ENCODE measurements at regions of chr1 and their contacts with region 1.

Region 1: DNA sequence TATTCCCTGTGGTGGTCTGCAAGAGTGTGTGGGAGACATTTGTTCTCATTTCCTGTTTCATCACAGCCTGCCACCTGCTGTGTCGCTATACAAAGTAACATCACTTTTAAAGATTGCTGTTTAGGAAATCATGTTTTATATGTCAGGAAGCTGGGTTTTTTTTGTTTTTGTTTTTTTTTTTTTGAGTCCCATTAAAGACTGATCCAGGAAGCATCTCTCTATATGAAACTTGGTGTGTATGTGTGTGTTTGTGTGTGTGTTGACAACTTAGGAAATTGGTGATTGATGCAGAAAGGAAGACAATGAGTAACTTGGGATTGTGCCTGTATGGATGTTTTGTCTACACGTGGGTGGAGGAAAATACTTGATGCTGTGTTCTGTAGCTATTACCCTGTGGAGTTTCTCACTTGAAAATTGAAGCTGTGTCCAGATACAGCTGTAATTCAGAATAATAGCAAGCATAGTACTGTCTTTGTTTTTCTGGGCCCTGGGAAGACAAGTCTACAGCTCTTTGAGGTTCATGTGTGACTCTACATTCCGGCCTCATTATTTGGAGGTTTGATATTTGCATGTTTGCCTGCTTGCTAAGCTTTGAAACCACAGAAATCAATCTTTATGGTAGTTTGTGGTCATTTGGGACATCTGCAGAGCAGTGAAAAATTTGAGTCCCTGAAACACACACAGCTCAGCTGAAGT is 47.9 kb downstream of the LAMC1 start:
- DNase-seq: no peak
- ATAC-seq: peak; percentile 67
- H3K4me3 Mint-ChIP-seq: peak overlapping the region; percentile 50
- H3K27ac Mint-ChIP-seq: no peak overlapping the region
- H3K4me1 Mint-ChIP-seq: peaks cover 33% of the 10 kb centered on the region
- H3K27me3 Mint-ChIP-seq: peaks cover 6% of the 10 kb centered on the region
- CTCF ChIP-seq: no peak

Region 2: GRCh38 chr1:182829285-182829932 is 241.7 kb before region 1 on chr1:
- CTCF ChIA-PET with region 1: no interaction called
- POLR2A ChIA-PET with region 1: no interaction called
- intact Hi-C with region 1: no loop called
- DNase-seq: no peak
- ATAC-seq: peak; percentile 64
- H3K4me3 Mint-ChIP-seq: peak overlapping the region; percentile 58
- H3K27ac Mint-ChIP-seq: peak overlapping the region; percentile 84
- H3K4me1 Mint-ChIP-seq: peaks cover 9% of the 10 kb centered on the region
- H3K27me3 Mint-ChIP-seq: no peaks in the 10 kb centered on the region
- CTCF ChIP-seq: no peak

Region 3: GRCh38 chr1:183048087-183049085 is 22.7 kb before region 1 on chr1:
- CTCF ChIA-PET with region 1: interaction called, 7 read pairs
- POLR2A ChIA-PET with region 1: interaction called, 9 read pairs
- intact Hi-C with region 1: loop called (anchors 2 kb)
- DNase-seq: no peak
- ATAC-seq: peak; percentile 98
- H3K4me3 Mint-ChIP-seq: peak overlapping the region; percentile 8
- H3K27ac Mint-ChIP-seq: peak overlapping the region; percentile 88
- H3K4me1 Mint-ChIP-seq: peaks cover 78% of the 10 kb centered on the region
- H3K27me3 Mint-ChIP-seq: no peaks in the 10 kb centered on the region
- CTCF ChIP-seq: no peak

Region 4: GRCh38 chr1:183089025-183089639 is 18.1 kb after region 1 on chr1:
- CTCF ChIA-PET with region 1: no interaction called
- POLR2A ChIA-PET with region 1: no interaction called
- intact Hi-C with region 1: loop called (anchors 2 kb)
- DNase-seq: no peak
- ATAC-seq: no peak
- H3K4me3 Mint-ChIP-seq: no peak overlapping the region
- H3K27ac Mint-ChIP-seq: no peak overlapping the region
- H3K4me1 Mint-ChIP-seq: peaks cover 20% of the 10 kb centered on the region
- H3K27me3 Mint-ChIP-seq: no peaks in the 10 kb centered on the region
- CTCF ChIP-seq: no peak

Region 5: GRCh38 chr1:183968386-183968785 is 897.3 kb after region 1 on chr1:
- CTCF ChIA-PET with region 1: no interaction called
- POLR2A ChIA-PET with region 1: no interaction called
- intact Hi-C with region 1: no loop called
- DNase-seq: no peak
- ATAC-seq: no peak
- H3K4me3 Mint-ChIP-seq: no peak overlapping the region
- H3K27ac Mint-ChIP-seq: no peak overlapping the region
- H3K4me1 Mint-ChIP-seq: no peaks in the 10 kb centered on the region
- H3K27me3 Mint-ChIP-seq: peaks cover 25% of the 10 kb centered on the region
- CTCF ChIP-seq: no peak

Measured in activated B cell treated with CpG ODN at 0.5 μM for 24 hours (primary cell).